Dorsolateral prefrontal cortex (tissue), 120 donors: ENCODE measurements at regions of chr3 and their contacts with region 1.

Region 1: GRCh38 chr3:116037954-116038911 is 407.1 kb downstream of the LSAMP start:
- DNase-seq: no peak
- H3K4me3 ChIP-seq: no peak overlapping the region
- H3K27ac ChIP-seq: peak overlapping the region in 41 of 59 donors; percentile 8 to 88 (median 47)
- H3K27me3 ChIP-seq: no peaks in the 10 kb centered on the region
- CTCF ChIP-seq: no peak

Region 2: GRCh38 chr3:115899001-115899400 is 139.2 kb before region 1 on chr3:
- intact Hi-C with region 1: loop called in 1 of 2 experiments (anchors 2 kb)
- DNase-seq: no peak
- H3K4me3 ChIP-seq: no peak overlapping the region
- H3K27ac ChIP-seq: peak overlapping the region in 43 of 59 donors; percentile 9 to 78 (median 48)
- H3K27me3 ChIP-seq: no peaks in the 10 kb centered on the region
- CTCF ChIP-seq: no peak